ENCODE measurements at regions of chr19 and their contacts with region 1.

Region 1: GRCh38 chr19:40974633-40975037 is 16.4 kb upstream of the CYP2B6 start:
- DNase-seq: peak; percentile 43 to 79 (median 70)
- ATAC-seq: peak; percentile 96
- H3K4me3 ChIP-seq: no peak overlapping the region
- H3K27ac ChIP-seq: no peak overlapping the region
- H3K4me1 ChIP-seq: no peaks in the 10 kb centered on the region
- H3K27me3 ChIP-seq: peaks cover 0 to 25% of the 10 kb centered on the region in 2 donors
- CTCF ChIP-seq: peak; percentile 94 to 96

Region 2: DNA sequence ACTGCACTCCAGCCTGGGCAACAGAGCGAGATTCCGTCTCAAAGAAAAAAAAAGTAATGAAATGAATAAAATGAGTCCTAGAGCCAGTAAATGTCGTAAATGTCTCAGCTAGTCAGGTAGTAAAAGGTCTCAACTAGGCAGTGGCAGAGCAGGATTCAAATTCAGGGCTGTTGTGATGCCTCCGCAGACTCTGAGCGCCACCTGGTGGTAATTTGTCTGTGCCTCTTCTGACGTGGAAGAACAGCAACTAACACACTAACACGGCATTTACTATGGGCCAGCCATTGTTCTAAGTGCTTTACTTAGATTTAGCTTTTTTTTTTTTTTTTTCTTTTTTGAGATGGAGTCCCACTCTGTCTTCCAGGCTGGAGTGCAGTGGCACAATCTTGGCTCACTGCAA is 169.8 kb after region 1 on chr19:
- intact Hi-C with region 1: loop called in 1 of 2 experiments (anchors 10 kb)
- DNase-seq: peak in 3 of 4 donors; percentile 23 to 79 (median 60)
- ATAC-seq: peak; percentile 97
- H3K4me3 ChIP-seq: no peak overlapping the region
- H3K27ac ChIP-seq: no peak overlapping the region
- H3K4me1 ChIP-seq: no peaks in the 10 kb centered on the region
- H3K27me3 ChIP-seq: peaks cover 0 to 10% of the 10 kb centered on the region in 2 donors
- CTCF ChIP-seq: peak; percentile 80 to 85